Common myeloid progenitor, CD34-positive (primary cell): ENCODE measurements at regions of chr10 and their contacts with region 1.

Region 1: GRCh38 chr10:49592726-49593563 is 17.2 kb upstream of the SLC18A3 start:
- DNase-seq: peak; percentile 49 to 73 (median 61)
- H3K4me3 ChIP-seq: no peak overlapping the region
- H3K27ac ChIP-seq: no peak overlapping the region
- H3K4me1 ChIP-seq: peaks cover 0 to 2% (median 0%) of the 10 kb centered on the region in 4 experiments
- H3K27me3 ChIP-seq: peaks cover 0 to 9% (median 1%) of the 10 kb centered on the region in 5 experiments

Region 2: DNA sequence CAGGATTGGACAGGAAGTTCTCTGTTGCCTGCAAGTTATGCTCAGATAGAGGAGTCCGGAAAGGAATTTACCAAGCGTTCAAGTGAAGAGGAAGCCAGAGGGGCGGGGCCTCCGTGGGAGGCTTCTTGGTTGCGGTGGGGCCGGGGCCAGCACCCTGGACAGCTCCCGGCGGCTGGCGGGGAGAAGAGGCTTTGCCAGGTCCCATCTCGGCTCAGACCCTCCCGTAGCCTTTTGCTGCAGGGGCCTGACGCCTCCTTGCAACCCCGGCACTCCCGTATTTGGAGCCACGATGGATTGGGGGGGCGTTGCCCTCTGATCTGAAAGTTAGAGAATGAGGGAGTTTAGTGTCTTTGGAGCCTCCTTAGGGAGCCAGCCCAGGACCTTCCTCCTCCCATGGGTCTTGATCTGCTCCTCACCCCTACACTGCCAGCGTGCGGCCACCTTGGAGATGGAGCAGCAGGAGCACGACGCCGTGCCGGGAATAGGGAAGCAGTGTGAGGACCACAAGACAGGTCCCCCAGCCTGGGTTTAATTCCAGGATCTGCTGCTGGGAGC is 14.1 kb after region 1 on chr10:
- CTCF ChIA-PET with region 1: interaction called, 17 read pairs
- POLR2A ChIA-PET with region 1: no interaction called
- DNase-seq: peak; percentile 72 to 88 (median 86)
- H3K4me3 ChIP-seq: no peak overlapping the region
- H3K27ac ChIP-seq: no peak overlapping the region
- H3K4me1 ChIP-seq: peaks cover 0 to 30% (median 12%) of the 10 kb centered on the region in 4 experiments
- H3K27me3 ChIP-seq: peaks cover 10 to 69% (median 23%) of the 10 kb centered on the region in 5 experiments

Region 3: DNA sequence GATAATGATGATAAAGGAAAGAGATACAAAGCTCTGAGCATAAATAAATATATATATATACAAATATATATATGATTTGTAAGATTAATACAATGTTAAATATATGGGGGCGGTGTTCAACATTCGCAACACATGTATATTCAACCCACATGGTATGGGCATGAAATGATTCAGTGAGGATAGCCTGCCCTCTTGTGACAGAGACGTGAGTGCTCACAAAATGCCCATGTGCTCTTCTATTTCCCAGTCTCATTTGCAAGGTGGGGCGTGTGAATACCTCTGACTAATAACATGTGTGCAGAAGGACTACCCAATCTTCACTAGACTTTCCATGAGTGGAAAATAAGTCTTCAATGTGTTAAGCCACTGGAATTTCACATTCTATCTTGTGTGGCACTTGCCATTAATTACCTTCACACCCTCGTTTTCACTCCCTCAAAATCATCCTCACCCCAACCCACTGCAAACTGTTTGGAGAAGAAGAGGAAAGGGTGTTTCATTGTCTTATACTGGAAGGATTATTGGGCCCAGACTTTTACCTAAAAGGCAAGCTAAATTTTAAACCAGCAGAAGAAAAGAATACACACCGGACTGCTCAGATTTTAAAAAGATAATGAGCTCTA is 631.5 kb after region 1 on chr10:
- CTCF ChIA-PET with region 1: interaction called, 24 read pairs
- POLR2A ChIA-PET with region 1: no interaction called
- DNase-seq: peak; percentile 63 to 84 (median 83)
- H3K4me3 ChIP-seq: no peak overlapping the region
- H3K27ac ChIP-seq: no peak overlapping the region
- H3K4me1 ChIP-seq: no peaks in the 10 kb centered on the region
- H3K27me3 ChIP-seq: peaks cover 0 to 4% (median 2%) of the 10 kb centered on the region in 5 experiments